ENCODE measurements at regions of chr6 and their contacts with region 1.

Region 1: DNA sequence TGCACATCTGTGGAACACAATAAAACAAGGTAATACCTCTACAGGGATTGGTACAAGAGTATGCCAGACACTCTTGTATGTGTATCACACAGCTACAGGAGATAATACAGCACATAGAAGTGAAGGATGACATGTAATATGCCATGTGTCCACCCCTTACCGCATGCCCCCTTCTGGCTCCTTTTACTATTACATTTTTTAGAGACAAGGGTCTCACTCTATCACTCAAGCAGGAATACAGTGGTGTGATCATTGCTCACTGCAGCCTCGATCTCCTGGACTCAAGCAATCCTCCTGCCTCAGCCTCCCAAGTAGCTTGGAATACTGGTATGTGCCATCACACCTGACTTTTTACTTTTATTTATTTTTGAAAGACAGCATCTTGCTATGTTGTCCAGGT is 4.2 kb upstream of the NCR3 start:
- DNase-seq: peak in 27 of 35 experiments; percentile 22 to 83 (median 43)
- ATAC-seq: peak; percentile 70 to 81 (median 78)
- H3K4me3 ChIP-seq: no peak overlapping the region
- H3K4me3 Mint-ChIP-seq: peak overlapping the region in 2 of 3 donors; percentile 31 to 65
- H3K27ac ChIP-seq: peak overlapping the region; percentile 9
- H3K27ac Mint-ChIP-seq: peak overlapping the region; percentile 77 to 88
- H3K4me1 ChIP-seq: peaks cover 29 to 64% of the 10 kb centered on the region in 2 experiments
- H3K4me1 Mint-ChIP-seq: peaks cover 52 to 55% (median 53%) of the 10 kb centered on the region in 3 donors
- H3K27me3 ChIP-seq: no peaks in the 10 kb centered on the region
- H3K27me3 Mint-ChIP-seq: no peaks in the 10 kb centered on the region

Region 2: GRCh38 chr6:30424549-30424948 is 1172.5 kb before region 1 on chr6:
- CTCF ChIA-PET with region 1: no interaction called
- POLR2A ChIA-PET with region 1: no interaction called
- DNase-seq: no peak
- ATAC-seq: no peak
- H3K4me3 ChIP-seq: no peak overlapping the region
- H3K4me3 Mint-ChIP-seq: no peak overlapping the region
- H3K27ac ChIP-seq: no peak overlapping the region
- H3K27ac Mint-ChIP-seq: no peak overlapping the region
- H3K4me1 ChIP-seq: no peaks in the 10 kb centered on the region
- H3K4me1 Mint-ChIP-seq: no peaks in the 10 kb centered on the region
- H3K27me3 ChIP-seq: peaks cover 14 to 19% of the 10 kb centered on the region in 2 experiments
- H3K27me3 Mint-ChIP-seq: peaks cover 49 to 62% of the 10 kb centered on the region in 2 donors

Region 3: GRCh38 chr6:31541658-31542521 is 55.1 kb before region 1 on chr6 and contains the start of gene DDX39B:
- CTCF ChIA-PET with region 1: interaction called, 3 to 244 read pairs
- POLR2A ChIA-PET with region 1: interaction called in 1 of 2 experiments, 3 read pairs
- DNase-seq: peak; percentile 84 to 97 (median 93)
- ATAC-seq: peak; percentile 80 to 81 (median 80)
- H3K4me3 ChIP-seq: peak within 1 kb of the TSS; percentile 87 to 99
- H3K4me3 Mint-ChIP-seq: peak within 1 kb of the TSS; percentile 96 to 99 (median 97)
- H3K27ac ChIP-seq: peak within 1 kb of the TSS; percentile 99
- H3K27ac Mint-ChIP-seq: peak within 1 kb of the TSS; percentile 99
- H3K4me1 ChIP-seq: peaks cover 28 to 46% of the 10 kb centered on the region in 2 experiments
- H3K4me1 Mint-ChIP-seq: peaks cover 53 to 68% (median 54%) of the 10 kb centered on the region in 3 donors
- H3K27me3 ChIP-seq: no peaks in the 10 kb centered on the region
- H3K27me3 Mint-ChIP-seq: no peaks in the 10 kb centered on the region
- total RNA-seq, gene DDX39B: 507 to 669 (median 631) TPM

Region 4: DNA sequence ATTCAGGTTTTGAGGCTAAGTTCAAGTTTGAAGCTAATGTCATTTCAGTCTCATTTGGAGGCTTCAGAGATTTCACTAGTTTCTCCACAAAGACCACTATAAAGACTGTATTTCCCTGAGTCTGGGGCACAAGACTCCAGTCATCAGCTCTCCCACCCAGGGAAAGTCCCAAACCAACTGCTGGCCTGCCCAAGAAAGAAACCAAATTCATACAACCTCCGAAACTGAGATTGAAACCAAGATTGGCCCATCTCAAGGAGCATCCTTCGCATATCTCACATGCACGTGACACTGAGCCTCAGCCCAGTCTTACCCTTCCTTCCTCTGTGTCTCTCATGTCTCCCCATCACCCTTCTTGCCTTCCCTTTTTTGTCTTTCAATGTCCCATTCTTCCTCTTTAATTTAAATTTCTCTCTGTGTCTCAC is 28.5 kb before region 1 on chr6:
- CTCF ChIA-PET with region 1: interaction called, 6 to 10 read pairs
- POLR2A ChIA-PET with region 1: interaction called in 1 of 2 experiments, 8 read pairs
- DNase-seq: peak in 34 of 35 experiments; percentile 30 to 94 (median 66)
- ATAC-seq: peak; percentile 54 to 71 (median 56)
- H3K4me3 ChIP-seq: no peak overlapping the region
- H3K4me3 Mint-ChIP-seq: peak overlapping the region in 2 of 3 donors; percentile 19 to 69
- H3K27ac ChIP-seq: peak overlapping the region; percentile 94
- H3K27ac Mint-ChIP-seq: peak overlapping the region; percentile 90 to 91
- H3K4me1 ChIP-seq: peaks cover 46 to 76% of the 10 kb centered on the region in 2 experiments
- H3K4me1 Mint-ChIP-seq: peaks cover 74 to 88% (median 85%) of the 10 kb centered on the region in 3 donors
- H3K27me3 ChIP-seq: no peaks in the 10 kb centered on the region
- H3K27me3 Mint-ChIP-seq: no peaks in the 10 kb centered on the region

Region 5: DNA sequence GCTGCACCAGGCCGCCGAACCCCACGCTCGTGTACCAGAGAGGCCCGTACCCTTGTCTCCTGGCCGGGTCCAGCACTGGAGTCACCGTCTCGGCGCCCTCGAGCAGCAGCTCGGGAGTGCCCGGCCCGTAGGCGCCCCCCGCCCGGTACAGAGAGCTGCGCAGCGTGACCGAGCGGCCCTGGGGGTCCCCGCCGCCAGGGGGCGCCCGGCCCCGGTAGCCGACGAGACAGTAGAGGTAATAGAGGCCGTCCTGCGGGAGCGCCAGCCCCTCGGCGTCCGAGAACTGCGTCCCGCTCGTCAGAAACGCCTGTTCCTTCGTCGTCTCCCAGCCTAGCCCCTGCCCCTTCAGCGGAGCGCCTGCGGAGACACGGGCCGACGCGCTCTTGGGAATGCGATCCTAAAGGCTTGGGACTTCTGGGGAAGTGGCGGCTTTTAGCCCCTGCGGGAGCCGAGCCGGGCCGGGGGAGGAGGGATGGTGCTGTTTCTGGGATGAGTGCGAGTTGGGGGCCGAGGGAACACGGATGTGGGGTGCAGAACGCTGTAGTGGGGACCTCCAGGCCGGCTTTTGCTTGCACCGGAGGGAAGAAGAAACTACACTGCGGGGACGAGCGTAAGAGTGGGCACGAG is 16.1 kb before region 1 on chr6:
- CTCF ChIA-PET with region 1: interaction called, 41 to 167 read pairs
- POLR2A ChIA-PET with region 1: interaction called, 3 to 7 read pairs
- DNase-seq: peak; percentile 69 to 93 (median 85)
- ATAC-seq: peak; percentile 65 to 70 (median 68)
- H3K4me3 ChIP-seq: peak overlapping the region; percentile 86 to 99
- H3K4me3 Mint-ChIP-seq: peak overlapping the region; percentile 97 to 100 (median 99)
- H3K27ac ChIP-seq: peak overlapping the region; percentile 92
- H3K27ac Mint-ChIP-seq: peak overlapping the region; percentile 94 to 98
- H3K4me1 ChIP-seq: peaks cover 39 to 86% of the 10 kb centered on the region in 2 experiments
- H3K4me1 Mint-ChIP-seq: peaks cover 75 to 83% (median 81%) of the 10 kb centered on the region in 3 donors
- H3K27me3 ChIP-seq: no peaks in the 10 kb centered on the region
- H3K27me3 Mint-ChIP-seq: no peaks in the 10 kb centered on the region

Region 6: GRCh38 chr6:31689249-31690110 is 92.5 kb after region 1 on chr6:
- CTCF ChIA-PET with region 1: no interaction called
- POLR2A ChIA-PET with region 1: no interaction called
- DNase-seq: peak in 2 of 35 experiments; percentile 19 to 27
- ATAC-seq: peak in 1 of 4 experiments; percentile 26
- H3K4me3 ChIP-seq: no peak overlapping the region
- H3K4me3 Mint-ChIP-seq: no peak overlapping the region
- H3K27ac ChIP-seq: no peak overlapping the region
- H3K27ac Mint-ChIP-seq: peak overlapping the region in 1 of 2 donors; percentile 43
- H3K4me1 ChIP-seq: no peaks in the 10 kb centered on the region
- H3K4me1 Mint-ChIP-seq: no peaks in the 10 kb centered on the region
- H3K27me3 ChIP-seq: no peaks in the 10 kb centered on the region
- H3K27me3 Mint-ChIP-seq: no peaks in the 10 kb centered on the region

Region 7: GRCh38 chr6:31834434-31835198 is 237.6 kb after region 1 on chr6:
- CTCF ChIA-PET with region 1: interaction called, 5 to 13 read pairs
- POLR2A ChIA-PET with region 1: no interaction called
- DNase-seq: peak; percentile 59 to 87 (median 79)
- ATAC-seq: peak; percentile 77 to 79 (median 78)
- H3K4me3 ChIP-seq: peak overlapping the region; percentile 97 to 98
- H3K4me3 Mint-ChIP-seq: peak overlapping the region; percentile 94 to 98 (median 98)
- H3K27ac ChIP-seq: peak overlapping the region; percentile 97
- H3K27ac Mint-ChIP-seq: peak overlapping the region; percentile 98 to 100
- H3K4me1 ChIP-seq: peaks cover 27 to 64% of the 10 kb centered on the region in 2 experiments
- H3K4me1 Mint-ChIP-seq: peaks cover 44 to 62% (median 60%) of the 10 kb centered on the region in 3 donors
- H3K27me3 ChIP-seq: no peaks in the 10 kb centered on the region
- H3K27me3 Mint-ChIP-seq: no peaks in the 10 kb centered on the region

Measured in T-cell (primary cell).